Activated CD8-positive, alpha-beta memory T cell treated with anti-CD3 and anti-CD28 coated beads, Interleukin-2, amount 10 ng/mL, durations not matched to agents 7 days and 5 days (primary cell): ENCODE measurements at regions of chr14 and their contacts with region 1.

Region 1: DNA sequence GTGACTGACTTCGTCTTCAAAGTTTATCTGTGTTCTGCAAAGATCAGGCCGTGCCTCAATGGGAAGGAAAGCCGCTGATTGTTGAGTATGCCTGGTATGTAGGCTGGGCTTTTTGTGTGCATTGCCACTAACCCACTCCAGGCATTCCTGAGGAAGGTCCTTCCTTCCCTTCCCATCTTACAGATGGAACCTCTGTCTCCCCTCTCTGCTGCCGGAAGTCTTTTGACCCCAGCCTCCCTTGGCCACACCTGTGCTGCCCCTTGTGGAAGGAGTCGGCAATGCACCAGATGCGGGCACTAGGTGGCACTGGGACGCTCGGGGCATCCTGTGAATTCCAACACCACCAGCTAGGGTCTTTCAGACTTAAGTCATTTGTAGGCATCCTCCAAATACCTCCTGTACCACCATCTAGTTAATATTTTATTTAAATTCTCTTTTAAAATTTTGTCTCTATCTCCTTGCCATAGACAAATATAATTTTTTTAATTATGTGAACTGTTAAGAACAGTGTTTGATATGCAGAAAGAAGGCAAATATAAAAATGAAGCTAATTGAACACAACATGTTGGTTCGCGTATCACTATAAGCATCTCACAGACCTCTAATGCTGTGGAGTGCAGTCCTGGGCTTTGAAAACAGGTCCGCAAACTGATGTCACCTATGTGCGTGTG is 99.5 kb downstream of the RIN3 start:
- DNase-seq: peak; percentile 59
- ATAC-seq: no peak
- H3K4me3 Mint-ChIP-seq: no peak overlapping the region
- H3K27ac Mint-ChIP-seq: no peak overlapping the region
- H3K4me1 Mint-ChIP-seq: peaks cover 56% of the 10 kb centered on the region
- H3K27me3 Mint-ChIP-seq: no peaks in the 10 kb centered on the region

Region 2: DNA sequence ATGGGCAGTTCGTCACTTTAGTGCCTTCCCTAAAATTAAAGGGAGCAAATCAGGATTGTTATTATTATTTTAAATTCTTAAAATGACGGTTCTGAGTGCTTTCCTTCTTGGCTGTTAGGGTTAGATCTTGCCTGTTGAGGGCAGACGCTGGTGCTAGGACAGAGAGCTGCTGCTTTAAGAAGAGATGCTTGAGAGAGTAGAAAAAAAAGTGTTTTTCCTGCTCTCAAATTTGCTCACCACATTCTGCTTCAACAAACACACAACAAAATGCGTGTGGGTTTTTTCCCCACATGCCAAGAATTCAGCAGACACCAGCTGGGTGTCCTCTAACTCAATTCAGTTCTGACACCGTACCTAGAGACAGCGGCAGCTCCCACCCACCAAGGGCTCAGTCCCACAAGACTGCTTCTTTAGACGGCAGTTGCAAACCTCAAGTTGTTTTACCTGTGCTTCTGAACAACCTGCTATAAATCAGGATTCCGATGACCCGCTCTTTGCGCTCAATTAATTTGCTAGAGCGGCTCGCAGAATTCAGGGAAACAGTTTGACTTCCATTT is 175.3 kb before region 1 on chr14:
- CTCF ChIA-PET with region 1: no interaction called
- DNase-seq: no peak
- ATAC-seq: no peak
- H3K4me3 Mint-ChIP-seq: no peak overlapping the region
- H3K27ac Mint-ChIP-seq: no peak overlapping the region
- H3K4me1 Mint-ChIP-seq: peaks cover 9% of the 10 kb centered on the region
- H3K27me3 Mint-ChIP-seq: no peaks in the 10 kb centered on the region

Region 3: GRCh38 chr14:92651106-92651757 is 38.1 kb after region 1 on chr14:
- CTCF ChIA-PET with region 1: interaction called, 10 read pairs
- DNase-seq: peak; percentile 94
- ATAC-seq: peak; percentile 90
- H3K4me3 Mint-ChIP-seq: peak overlapping the region; percentile 75
- H3K27ac Mint-ChIP-seq: peak overlapping the region; percentile 93
- H3K4me1 Mint-ChIP-seq: peaks cover 83% of the 10 kb centered on the region
- H3K27me3 Mint-ChIP-seq: no peaks in the 10 kb centered on the region

Region 4: GRCh38 chr14:92680781-92681650 is 67.9 kb after region 1 on chr14:
- CTCF ChIA-PET with region 1: interaction called, 11 read pairs
- DNase-seq: peak; percentile 84
- ATAC-seq: peak; percentile 75
- H3K4me3 Mint-ChIP-seq: no peak overlapping the region
- H3K27ac Mint-ChIP-seq: peak overlapping the region; percentile 36
- H3K4me1 Mint-ChIP-seq: peaks cover 36% of the 10 kb centered on the region
- H3K27me3 Mint-ChIP-seq: no peaks in the 10 kb centered on the region

Region 5: DNA sequence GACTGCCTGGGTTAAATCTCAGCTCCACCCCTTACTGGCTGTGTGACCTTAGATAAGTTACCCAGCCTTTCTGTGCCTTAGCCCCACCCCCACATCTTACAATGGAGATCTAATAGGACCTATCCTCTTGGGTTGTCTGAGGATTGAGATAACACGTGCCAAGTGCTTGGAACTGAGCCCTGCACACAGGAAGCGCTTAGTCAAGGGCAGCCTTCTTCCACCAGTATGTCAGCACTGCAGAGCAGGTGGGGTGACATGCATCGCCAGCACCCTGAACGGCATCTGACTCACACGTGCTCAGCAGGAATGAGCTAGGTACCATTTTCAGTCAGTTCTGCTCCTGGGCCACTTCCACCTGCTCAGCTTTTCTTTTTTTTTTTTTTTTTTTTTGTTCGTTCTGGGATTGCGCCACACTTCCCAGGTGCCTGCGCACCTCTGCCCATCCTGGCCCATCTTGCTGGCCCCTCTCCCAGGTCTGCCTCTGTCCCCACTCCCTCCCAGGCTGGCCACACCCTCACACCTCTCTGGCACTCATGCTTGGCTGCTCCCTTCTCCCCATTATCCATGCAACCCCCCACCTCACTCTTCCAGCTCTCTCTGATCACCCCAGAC is 115.7 kb after region 1 on chr14:
- CTCF ChIA-PET with region 1: no interaction called
- DNase-seq: peak; percentile 64
- ATAC-seq: peak; percentile 76
- H3K4me3 Mint-ChIP-seq: no peak overlapping the region
- H3K27ac Mint-ChIP-seq: peak overlapping the region; percentile 39
- H3K4me1 Mint-ChIP-seq: peaks cover 30% of the 10 kb centered on the region
- H3K27me3 Mint-ChIP-seq: peaks cover 61% of the 10 kb centered on the region

Region 6: GRCh38 chr14:92748259-92749016 is 135.3 kb after region 1 on chr14 and contains the start of gene LGMN:
- CTCF ChIA-PET with region 1: no interaction called
- DNase-seq: peak; percentile 72
- ATAC-seq: peak; percentile 86
- H3K4me3 Mint-ChIP-seq: peak within 1 kb of the TSS; percentile 31
- H3K27ac Mint-ChIP-seq: no peak within 1 kb of the TSS
- H3K4me1 Mint-ChIP-seq: peaks cover 31% of the 10 kb centered on the region
- H3K27me3 Mint-ChIP-seq: peaks cover 74% of the 10 kb centered on the region
- total RNA-seq, gene LGMN: 0.63 to 1.2 TPM

Region 7: GRCh38 chr14:92846162-92846897 is 233.2 kb after region 1 on chr14:
- CTCF ChIA-PET with region 1: no interaction called
- DNase-seq: peak; percentile 66
- ATAC-seq: peak; percentile 88
- H3K4me3 Mint-ChIP-seq: no peak overlapping the region
- H3K27ac Mint-ChIP-seq: no peak overlapping the region
- H3K4me1 Mint-ChIP-seq: peaks cover 16% of the 10 kb centered on the region
- H3K27me3 Mint-ChIP-seq: no peaks in the 10 kb centered on the region